Activated naive CD4-positive, alpha-beta T cell treated with anti-CD3 and anti-CD28 coated beads, Interleukin-2, amount 10 ng/mL, durations not matched to agents 7 days and 5 days (primary cell): ENCODE measurements at regions of chr4 and their contacts with region 1.

Region 1: GRCh38 chr4:69823481-69824186 is 36.3 kb downstream of the SULT1E1 start:
- DNase-seq: peak; percentile 74
- H3K4me3 Mint-ChIP-seq: no peak overlapping the region
- H3K27ac Mint-ChIP-seq: no peak overlapping the region
- H3K4me1 Mint-ChIP-seq: peaks cover 4% of the 10 kb centered on the region
- H3K27me3 Mint-ChIP-seq: no peaks in the 10 kb centered on the region

Region 2: DNA sequence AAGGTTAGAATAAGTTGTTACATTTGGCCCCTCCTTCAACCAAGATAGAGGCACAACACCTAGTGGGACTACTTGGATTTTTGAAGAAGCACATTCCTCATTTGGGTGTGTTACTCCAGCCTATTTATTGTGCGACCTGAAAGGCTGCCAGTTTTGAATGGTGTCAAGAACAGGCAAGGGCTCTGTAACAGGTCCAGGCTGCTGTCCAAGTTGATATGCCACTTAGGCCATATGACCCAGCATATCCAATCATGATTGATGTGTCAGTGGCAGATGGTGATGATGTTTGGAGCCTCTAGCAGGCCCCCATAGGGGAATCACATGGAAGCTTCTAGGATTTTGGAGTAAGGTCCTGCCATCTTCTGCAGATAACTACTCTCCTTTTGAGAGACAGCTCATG is 292.4 kb before region 1 on chr4:
- CTCF ChIA-PET with region 1: no interaction called
- DNase-seq: no peak
- H3K4me3 Mint-ChIP-seq: no peak overlapping the region
- H3K27ac Mint-ChIP-seq: no peak overlapping the region
- H3K4me1 Mint-ChIP-seq: no peaks in the 10 kb centered on the region
- H3K27me3 Mint-ChIP-seq: no peaks in the 10 kb centered on the region

Region 3: GRCh38 chr4:69689599-69689998 is 134.0 kb before region 1 on chr4:
- CTCF ChIA-PET with region 1: interaction called, 24 read pairs
- DNase-seq: no peak
- H3K4me3 Mint-ChIP-seq: no peak overlapping the region
- H3K27ac Mint-ChIP-seq: no peak overlapping the region
- H3K4me1 Mint-ChIP-seq: peaks cover 2% of the 10 kb centered on the region
- H3K27me3 Mint-ChIP-seq: no peaks in the 10 kb centered on the region

Region 4: DNA sequence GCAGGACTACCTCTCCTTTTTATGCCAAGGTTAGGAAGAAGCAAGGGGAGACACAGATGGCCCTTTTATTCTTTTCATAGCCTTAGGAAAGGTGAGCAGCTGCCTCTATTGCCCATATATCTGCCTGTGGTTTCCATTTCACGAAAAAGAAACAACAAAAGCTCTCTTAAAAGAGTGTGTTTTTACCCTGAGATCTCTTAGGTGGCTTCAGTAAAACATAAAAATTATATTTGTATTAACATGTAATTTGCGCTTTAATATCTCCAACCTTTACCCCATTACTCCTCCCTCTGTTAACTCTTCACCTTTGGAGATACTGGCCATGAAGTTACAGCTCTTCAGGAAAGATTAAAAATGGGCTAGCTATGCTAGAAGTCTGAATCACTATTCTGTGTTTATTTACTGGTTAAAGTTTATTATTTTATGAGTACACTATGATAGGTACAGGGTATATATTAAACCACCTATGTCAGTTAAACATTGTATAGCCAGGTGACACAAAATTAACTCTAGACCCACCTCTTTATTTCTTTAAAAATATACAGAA is 48.2 kb before region 1 on chr4:
- CTCF ChIA-PET with region 1: no interaction called
- DNase-seq: no peak
- H3K4me3 Mint-ChIP-seq: no peak overlapping the region
- H3K27ac Mint-ChIP-seq: no peak overlapping the region
- H3K4me1 Mint-ChIP-seq: no peaks in the 10 kb centered on the region
- H3K27me3 Mint-ChIP-seq: no peaks in the 10 kb centered on the region